ENCODE measurements at regions of chr4 and their contacts with region 1.

Region 1: GRCh38 chr4:142405021-142405694 is 440.9 kb downstream of the INPP4B start:
- DNase-seq: peak; percentile 9 to 67 (median 38)
- ATAC-seq: peak; percentile 61 to 68
- H3K4me3 Mint-ChIP-seq: peak overlapping the region; percentile 95 to 100 (median 98)
- H3K27ac Mint-ChIP-seq: peak overlapping the region; percentile 86 to 98 (median 95)
- H3K4me1 Mint-ChIP-seq: peaks cover 36 to 67% (median 65%) of the 10 kb centered on the region in 4 donors
- H3K27me3 Mint-ChIP-seq: no peaks in the 10 kb centered on the region

Region 2: DNA sequence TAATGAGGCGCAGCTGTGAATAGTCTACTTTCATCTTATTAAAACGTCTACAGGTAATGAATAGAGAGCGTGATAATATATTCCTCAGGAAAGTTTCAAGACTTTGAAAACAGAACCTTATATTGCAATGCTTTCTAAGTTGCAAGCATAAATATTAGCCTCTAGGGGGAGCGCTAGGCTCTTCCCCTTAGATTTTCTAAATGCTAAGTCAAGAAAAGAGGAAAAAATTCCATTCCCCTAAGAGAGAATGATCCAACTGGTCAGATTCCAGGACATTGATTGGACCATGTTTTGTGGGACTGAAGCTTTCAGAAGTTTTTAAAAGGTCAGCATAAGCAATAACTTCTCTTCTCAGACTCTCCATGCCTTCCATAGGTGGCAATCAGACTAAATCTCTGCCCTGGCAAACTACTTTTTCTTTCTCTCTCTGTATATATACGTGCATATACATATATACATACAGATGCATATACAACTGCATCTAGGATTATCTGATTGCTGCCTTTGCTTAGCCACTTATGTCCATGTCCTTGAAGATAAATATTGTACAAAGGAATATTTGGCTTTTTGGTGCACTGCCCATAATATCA is 51.9 kb before region 1 on chr4:
- POLR2A ChIA-PET with region 1: interaction called, 25 read pairs
- DNase-seq: peak in 3 of 10 donors; percentile 42 to 56 (median 43)
- ATAC-seq: no peak
- H3K4me3 Mint-ChIP-seq: peak overlapping the region in 6 of 10 donors; percentile 7 to 79 (median 66)
- H3K27ac Mint-ChIP-seq: peak overlapping the region; percentile 5 to 97 (median 84)
- H3K4me1 Mint-ChIP-seq: peaks cover 44 to 93% (median 87%) of the 10 kb centered on the region in 4 donors
- H3K27me3 Mint-ChIP-seq: no peaks in the 10 kb centered on the region

Region 3: GRCh38 chr4:142383800-142384635 is 21.1 kb before region 1 on chr4:
- POLR2A ChIA-PET with region 1: interaction called, 10 read pairs
- DNase-seq: no peak
- ATAC-seq: no peak
- H3K4me3 Mint-ChIP-seq: peak overlapping the region in 1 of 10 donors; percentile 31
- H3K27ac Mint-ChIP-seq: peak overlapping the region in 5 of 10 donors; percentile 27 to 87 (median 45)
- H3K4me1 Mint-ChIP-seq: peaks cover 32 to 65% (median 54%) of the 10 kb centered on the region in 4 donors
- H3K27me3 Mint-ChIP-seq: no peaks in the 10 kb centered on the region

Region 4: GRCh38 chr4:142416711-142417275 is 11.6 kb after region 1 on chr4:
- POLR2A ChIA-PET with region 1: interaction called, 22 read pairs
- DNase-seq: peak in 2 of 10 donors; percentile 35 to 36
- ATAC-seq: peak; percentile 84 to 89
- H3K4me3 Mint-ChIP-seq: peak overlapping the region; percentile 43 to 89 (median 74)
- H3K27ac Mint-ChIP-seq: peak overlapping the region; percentile 73 to 100 (median 89)
- H3K4me1 Mint-ChIP-seq: peaks cover 17 to 59% (median 37%) of the 10 kb centered on the region in 4 donors
- H3K27me3 Mint-ChIP-seq: no peaks in the 10 kb centered on the region

Region 5: DNA sequence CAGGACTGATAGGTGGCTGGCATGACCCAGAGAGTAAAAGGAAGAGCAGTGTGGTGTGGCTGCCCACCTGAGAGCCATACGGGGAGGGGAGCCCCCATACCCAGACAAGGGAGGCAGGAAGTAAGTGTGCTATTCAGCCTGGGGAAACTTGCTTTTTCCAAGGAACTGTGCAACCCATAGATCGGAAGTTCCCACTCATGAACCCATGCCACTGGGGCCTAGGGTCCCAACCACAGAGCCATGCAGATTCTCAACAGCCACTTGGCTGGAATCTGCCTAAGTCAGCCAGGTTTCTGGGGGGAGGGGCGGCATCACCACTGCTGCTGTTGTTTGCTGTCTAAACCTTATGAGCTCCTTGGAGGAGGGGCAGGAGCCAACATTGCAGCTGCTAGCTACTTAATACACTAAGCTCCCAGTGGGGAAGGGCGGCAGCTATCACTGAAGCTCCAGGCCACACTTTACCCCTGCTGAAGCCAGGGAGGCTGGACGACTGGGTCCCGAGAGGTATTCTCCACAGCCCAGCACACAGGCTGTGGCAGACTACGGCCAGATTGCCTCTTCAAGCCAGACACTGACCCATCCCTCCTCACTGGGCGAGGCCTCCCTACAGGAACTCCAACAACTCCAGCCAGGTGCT is 30.6 kb after region 1 on chr4:
- POLR2A ChIA-PET with region 1: no interaction called
- DNase-seq: no peak
- ATAC-seq: no peak
- H3K4me3 Mint-ChIP-seq: no peak overlapping the region
- H3K27ac Mint-ChIP-seq: peak overlapping the region in 2 of 10 donors; percentile 7 to 71
- H3K4me1 Mint-ChIP-seq: peaks cover 12 to 36% (median 17%) of the 10 kb centered on the region in 4 donors
- H3K27me3 Mint-ChIP-seq: no peaks in the 10 kb centered on the region

Measured in naive thymus-derived CD8-positive, alpha-beta T cell (primary cell).